ENCODE measurements at regions of chr22 and their contacts with region 1.

Region 1: DNA sequence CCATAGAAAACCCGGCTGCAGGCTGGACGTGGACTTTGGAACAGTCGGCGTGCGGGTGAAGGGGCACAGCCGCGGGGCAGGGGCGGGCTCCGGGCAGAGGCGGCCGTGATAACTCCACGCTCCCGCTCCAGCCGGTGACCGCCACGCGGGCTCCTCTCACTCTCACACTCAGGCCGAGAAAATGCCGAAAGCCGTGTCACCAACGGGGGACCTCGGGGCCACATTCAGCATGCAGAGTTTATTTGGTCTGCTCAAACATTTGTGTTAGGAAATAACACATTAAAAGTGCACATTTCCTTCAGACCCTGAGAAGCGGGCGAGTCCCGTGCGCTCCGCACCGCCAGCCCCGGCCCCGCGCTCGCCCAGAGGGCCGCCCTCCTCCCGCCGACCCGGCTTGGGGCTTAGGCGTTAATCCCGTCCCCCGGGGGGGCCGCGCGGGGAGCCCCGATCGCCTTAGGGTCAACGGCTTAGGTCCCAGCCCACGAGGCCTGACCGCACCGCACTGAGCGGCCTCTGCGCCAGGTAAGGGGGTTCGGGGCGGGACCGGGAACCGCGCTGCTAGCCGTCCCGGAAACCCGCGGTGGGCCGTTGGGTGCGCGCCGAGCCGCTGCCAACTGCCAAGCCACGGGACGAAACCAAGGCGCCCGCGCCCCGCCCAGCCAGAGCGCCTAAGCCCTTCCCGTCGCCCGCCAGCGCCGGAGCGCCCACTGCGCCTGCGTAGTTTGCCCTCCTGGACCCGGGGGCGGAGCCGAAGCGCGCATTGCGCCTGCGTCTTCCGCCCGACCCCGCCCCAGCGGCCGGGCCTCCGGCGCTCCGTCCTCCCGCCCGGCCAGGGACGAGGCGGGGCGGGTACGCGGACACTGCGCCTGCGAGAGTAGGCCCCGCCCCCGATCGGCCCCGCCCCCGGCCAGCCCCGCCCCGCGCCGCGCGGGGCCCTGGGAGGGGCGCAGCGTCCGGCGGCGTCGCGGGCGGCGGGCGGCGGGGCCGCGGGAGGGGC is at the start of gene ZBED4:
- DNase-seq: peak; percentile 81 to 98 (median 95)

Region 2: DNA sequence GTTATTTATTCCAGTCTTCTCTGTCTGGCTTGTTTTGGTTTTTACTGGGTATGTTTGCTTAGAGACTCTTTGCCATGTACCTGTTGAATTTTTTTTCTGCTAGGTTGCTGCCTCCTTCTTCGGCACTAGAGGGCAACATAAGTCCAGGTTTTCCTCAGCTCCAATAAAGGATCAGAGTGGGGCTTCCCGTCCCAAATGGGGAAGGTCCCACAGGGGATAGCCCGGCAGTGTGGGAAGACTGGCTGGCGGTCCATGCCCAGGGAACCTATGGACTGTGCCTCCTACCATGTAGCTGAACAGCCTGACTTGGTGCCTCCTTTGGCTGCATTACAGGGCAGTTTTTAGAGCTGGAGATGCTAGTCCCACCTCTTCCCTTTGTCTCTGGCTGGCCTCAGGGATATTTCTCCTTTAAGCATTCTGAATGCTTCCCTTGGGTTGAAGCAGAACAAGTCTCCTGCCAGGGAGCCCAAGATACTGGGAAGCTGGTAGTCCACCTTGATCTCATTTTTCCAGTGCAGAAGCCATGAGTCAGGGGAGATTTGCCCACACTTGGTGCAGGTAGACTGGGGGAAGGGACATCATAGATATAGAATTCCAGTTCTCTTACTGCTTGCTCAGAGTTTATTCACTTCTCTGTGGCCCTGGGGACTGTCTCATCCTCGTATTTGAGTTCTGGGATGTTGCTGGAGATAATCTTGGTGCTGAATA is 85.7 kb before region 1 on chr22:
- intact Hi-C with region 1: no loop called
- DNase-seq: peak in 21 of 42 donors; percentile 3 to 56 (median 24)

Region 3: GRCh38 chr22:49827853-49828598 is 25.2 kb before region 1 on chr22 and contains the start of gene BRD1:
- intact Hi-C with region 1: loop called (anchors 2 kb)
- DNase-seq: peak in 38 of 42 donors; percentile 34 to 84 (median 67)

Region 4: DNA sequence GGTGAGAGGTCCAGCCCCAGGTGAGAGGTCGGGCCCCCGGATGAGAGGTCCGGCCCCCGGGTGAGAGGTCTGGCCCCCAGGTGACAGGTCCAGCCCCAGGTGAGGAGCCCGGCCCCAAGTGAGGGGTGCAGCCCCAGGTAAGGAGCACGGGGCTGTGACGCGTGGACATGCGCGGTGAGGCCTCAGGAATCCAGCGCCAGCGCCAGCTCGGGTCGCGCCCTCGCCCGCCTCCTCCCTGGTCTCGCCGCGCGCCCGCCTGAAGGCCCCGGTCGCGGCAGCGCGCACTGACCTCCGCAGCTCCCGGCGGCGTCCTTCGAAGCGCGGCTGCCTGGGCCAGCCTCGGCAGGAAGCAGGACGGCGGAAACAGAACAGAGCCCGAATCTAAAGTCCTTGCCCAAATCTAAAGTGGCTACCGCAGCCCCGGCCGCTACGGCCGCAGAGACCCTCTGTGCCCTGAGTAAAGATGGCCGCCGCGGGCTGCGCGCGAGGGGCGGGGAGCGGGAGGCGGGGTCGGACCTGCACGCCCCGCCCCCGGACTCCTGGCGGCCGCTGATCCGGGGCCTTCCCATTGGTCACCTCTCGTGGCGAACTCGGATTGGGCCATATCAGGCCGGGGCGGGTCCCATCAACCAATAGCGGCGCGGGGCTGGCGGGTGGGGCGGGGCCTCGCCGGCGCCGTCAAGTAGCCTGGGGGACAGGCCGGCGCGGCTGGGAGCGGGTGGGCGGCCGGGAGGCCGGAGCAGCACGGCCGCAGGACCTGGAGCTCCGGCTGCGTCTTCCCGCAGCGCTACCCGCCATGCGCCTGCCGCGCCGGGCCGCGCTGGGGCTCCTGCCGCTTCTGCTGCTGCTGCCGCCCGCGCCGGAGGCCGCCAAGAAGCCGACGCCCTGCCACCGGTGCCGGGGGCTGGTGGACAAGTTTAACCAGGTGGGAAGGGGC is 65.0 kb after region 1 on chr22 and contains the starts of genes ALG12 and CRELD2:
- intact Hi-C with region 1: loop called (anchors 5 kb)
- DNase-seq: peak; percentile 98 to 100 (median 99)

Measured in head of caudate nucleus (tissue), 42 donors.